ENCODE measurements at regions of chr2 and their contacts with region 1.

Region 1: DNA sequence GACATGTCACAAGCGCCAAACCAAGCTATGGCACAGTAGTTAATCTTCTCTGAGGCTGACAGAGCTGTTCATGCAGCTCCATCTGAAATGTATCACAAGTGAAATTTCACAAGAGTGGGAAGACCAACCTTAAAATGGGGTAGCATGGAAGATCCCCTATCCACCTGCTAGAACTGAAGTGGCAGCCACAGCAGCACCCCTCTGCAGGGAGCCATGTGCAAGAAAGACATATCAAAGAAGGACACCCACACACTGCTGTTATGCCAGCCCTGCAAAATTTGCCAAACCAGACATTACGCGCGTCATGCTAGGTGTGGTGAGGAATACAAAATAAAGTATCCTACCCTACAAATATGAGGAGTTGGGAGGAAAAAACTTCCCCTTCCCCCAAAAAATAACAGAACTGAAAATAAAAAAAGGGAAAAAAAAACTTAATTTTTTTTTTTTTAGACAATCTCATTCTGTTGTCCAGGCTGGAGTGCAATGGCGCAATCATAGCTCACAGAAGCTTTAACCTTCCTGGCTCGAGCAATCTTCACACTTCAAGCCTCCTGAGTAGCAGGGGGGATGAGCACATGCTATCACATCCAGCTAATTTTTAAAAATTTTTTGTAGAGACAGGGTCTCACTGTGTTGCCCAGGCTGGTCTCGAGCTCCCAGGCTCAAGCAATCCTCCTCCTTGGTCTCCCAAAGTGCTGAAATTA is 76.2 kb downstream of the STK39 start:
- DNase-seq: no peak
- ATAC-seq: no peak
- H3K4me3 Mint-ChIP-seq: no peak overlapping the region
- H3K27ac Mint-ChIP-seq: no peak overlapping the region
- H3K4me1 Mint-ChIP-seq: peaks cover 35% of the 10 kb centered on the region
- H3K27me3 Mint-ChIP-seq: no peaks in the 10 kb centered on the region
- CTCF ChIP-seq: no peak

Region 2: DNA sequence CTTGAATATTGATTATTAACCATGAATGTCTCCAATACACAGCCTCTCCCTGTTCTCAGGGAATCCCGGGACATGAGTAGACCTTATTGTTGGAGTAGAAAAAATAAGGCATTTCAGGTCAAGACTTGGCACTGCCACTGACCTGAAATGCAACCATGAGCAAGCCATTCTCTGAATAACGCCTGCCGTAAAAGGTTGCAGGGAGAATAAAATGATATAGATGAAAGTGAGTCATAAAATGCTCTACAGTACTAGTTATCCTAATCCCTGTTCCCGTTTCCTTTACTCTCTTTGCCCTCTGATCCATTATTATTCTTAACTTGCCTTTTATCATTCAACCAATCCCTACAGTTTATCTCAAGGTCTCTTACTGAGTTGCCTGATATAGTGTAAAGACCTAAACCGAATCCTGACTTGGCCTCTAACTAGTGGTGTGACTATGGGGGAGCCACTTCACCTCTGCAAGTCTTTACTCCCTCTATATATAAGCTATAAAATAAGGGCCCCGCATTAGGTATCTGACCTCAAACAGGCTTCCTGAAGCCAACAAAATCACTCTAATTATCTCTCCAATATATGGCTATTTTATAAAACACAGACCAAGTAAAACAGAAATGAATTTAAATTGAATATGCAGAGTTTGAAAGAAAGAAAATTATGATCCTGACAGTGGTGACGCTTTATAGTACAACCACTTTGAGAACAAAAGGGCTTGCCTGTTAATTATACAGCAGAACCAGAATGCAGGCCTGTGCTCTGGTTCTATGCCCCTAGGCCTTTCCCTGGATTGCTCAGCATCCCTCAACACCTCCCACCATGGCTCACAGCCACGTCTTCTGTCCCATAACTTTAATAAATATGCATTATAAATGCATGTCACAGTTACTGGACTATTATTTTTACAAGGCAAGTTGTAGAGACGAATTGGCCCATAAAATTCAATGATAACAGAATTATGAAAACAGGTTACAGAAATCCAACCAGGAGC is 106.9 kb before region 1 on chr2:
- CTCF ChIA-PET with region 1: no interaction called
- POLR2A ChIA-PET with region 1: no interaction called
- intact Hi-C with region 1: no loop called
- DNase-seq: no peak
- ATAC-seq: no peak
- H3K4me3 Mint-ChIP-seq: no peak overlapping the region
- H3K27ac Mint-ChIP-seq: no peak overlapping the region
- H3K4me1 Mint-ChIP-seq: no peaks in the 10 kb centered on the region
- H3K27me3 Mint-ChIP-seq: no peaks in the 10 kb centered on the region
- CTCF ChIP-seq: no peak

Region 3: DNA sequence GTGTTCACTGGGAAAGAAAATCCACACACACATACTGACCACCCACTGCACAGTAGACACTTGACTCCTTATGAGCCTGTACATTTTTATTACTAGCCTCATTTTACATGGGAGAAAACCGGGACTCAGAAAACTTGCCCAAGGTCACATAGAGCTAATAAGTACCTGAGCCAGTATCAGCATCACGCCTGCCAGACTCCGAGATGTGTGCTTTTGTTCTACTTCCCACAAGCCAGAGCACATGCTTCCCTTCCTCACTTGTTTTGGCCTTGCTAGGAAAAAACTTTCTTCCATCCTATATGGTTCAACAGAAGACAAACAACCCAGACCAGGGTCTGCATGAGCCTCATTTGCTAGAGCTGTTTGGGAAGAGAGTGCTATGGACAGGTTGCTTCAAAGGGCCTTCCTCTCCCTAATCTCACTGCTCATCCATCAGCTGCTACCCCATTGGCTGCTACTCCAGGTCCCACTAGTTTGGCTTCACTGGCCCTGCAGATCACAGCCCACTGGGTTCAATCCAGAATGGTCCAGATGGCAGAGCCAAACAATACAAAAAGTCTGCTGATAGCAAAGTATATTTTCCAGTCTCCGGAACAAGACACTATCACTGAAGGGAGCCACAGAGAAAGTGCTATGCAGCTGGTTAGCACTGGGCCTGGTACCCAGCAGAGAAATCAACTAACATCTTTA is 12.2 kb after region 1 on chr2:
- CTCF ChIA-PET with region 1: no interaction called
- POLR2A ChIA-PET with region 1: interaction called, 11 read pairs
- intact Hi-C with region 1: no loop called
- DNase-seq: no peak
- ATAC-seq: no peak
- H3K4me3 Mint-ChIP-seq: no peak overlapping the region
- H3K27ac Mint-ChIP-seq: no peak overlapping the region
- H3K4me1 Mint-ChIP-seq: peaks cover 8% of the 10 kb centered on the region
- H3K27me3 Mint-ChIP-seq: no peaks in the 10 kb centered on the region
- CTCF ChIP-seq: no peak

Region 4: DNA sequence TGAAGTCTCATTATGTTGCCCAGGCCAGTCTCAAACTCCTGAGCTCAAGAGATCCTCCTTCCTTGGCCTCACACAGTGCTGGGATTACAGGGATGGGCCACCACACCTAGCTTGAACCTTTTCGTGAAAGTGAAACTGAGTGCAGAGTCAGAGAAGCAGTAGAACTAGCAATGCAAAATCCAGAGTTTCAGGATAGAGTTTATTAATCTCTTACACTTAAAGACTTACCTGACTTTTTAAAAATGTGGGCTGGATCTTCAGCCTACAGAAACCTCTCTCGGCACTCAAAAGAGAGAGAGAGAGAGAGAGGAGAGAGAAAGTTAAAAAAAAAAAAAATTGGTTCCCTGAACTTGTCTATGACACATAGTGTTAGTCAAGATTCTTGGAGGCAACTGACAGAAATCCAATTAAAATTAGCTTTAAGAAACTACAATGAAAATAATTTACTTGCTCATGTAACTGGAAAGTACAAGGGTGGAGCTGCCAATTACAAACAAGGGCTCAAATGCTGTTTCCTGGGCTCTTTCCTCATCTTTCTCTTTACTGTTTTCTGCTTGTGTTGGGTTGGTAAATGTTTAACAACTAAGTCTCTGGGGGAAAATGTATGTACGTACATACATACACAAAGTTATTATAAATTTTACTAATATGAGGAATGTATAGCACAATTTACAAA is 186.7 kb after region 1 on chr2:
- CTCF ChIA-PET with region 1: no interaction called
- POLR2A ChIA-PET with region 1: no interaction called
- intact Hi-C with region 1: no loop called
- DNase-seq: no peak
- ATAC-seq: no peak
- H3K4me3 Mint-ChIP-seq: no peak overlapping the region
- H3K27ac Mint-ChIP-seq: no peak overlapping the region
- H3K4me1 Mint-ChIP-seq: peaks cover 4% of the 10 kb centered on the region
- H3K27me3 Mint-ChIP-seq: peaks cover 4% of the 10 kb centered on the region
- CTCF ChIP-seq: no peak

Region 5: DNA sequence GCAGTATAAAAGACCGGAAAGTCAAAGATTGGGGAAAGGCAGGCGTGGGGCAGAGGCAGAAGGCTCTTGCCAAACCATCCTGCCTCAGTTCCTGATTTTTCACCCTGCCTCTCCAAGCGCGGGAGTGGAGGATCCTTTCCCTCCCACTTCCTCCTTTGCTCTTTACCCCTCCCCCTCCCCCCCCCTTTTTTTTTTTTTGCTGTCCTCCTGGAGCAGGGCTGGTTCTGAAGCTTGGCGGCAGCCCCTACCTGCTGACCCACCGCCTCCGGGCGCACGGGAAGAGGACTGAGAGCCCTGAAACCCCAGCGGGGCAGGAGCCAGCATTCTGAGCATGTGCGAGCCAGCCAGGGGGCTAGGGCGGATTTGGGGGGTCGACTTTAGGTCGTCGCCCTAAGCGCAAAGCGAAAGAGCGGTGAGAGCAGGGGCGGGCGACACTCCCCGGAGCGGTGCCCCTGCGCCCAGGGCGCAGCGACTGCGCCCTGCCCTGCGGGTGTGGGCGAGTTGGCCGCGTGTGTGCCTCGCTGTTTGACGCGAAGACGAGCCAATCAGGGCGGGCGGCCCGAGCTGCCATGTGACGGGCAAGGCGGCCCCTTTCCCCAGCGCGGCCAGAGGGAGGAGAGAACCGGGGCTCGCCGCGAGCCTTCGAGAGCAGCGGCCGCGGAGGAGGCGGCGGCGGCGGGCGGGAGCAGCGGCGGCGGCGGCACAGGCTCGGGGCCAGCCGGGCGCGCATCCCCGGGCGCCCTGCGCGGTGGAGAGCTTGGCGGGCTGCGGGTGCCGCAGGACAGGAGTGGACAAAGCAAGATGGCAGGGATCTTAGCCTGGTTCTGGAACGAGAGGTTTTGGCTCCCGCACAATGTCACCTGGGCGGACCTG is 284.7 kb after region 1 on chr2 and contains the start of gene CERS6:
- CTCF ChIA-PET with region 1: no interaction called
- POLR2A ChIA-PET with region 1: no interaction called
- intact Hi-C with region 1: no loop called
- DNase-seq: peak; percentile 78
- ATAC-seq: peak; percentile 94
- H3K4me3 Mint-ChIP-seq: no peak within 1 kb of the TSS
- H3K27ac Mint-ChIP-seq: peak within 1 kb of the TSS; percentile 74
- H3K4me1 Mint-ChIP-seq: peaks cover 20% of the 10 kb centered on the region
- H3K27me3 Mint-ChIP-seq: no peaks in the 10 kb centered on the region
- CTCF ChIP-seq: no peak
- total RNA-seq, gene CERS6: 5.3 and 6.1 TPM in 2 replicates

Measured in activated B cell treated with CpG ODN at 0.5 μM for 24 hours (primary cell).